Activated CD4-positive, alpha-beta memory T cell treated with anti-CD3 and anti-CD28 coated beads for 36 hours (primary cell): ENCODE measurements at regions of chr4 and their contacts with region 1.

Region 1: DNA sequence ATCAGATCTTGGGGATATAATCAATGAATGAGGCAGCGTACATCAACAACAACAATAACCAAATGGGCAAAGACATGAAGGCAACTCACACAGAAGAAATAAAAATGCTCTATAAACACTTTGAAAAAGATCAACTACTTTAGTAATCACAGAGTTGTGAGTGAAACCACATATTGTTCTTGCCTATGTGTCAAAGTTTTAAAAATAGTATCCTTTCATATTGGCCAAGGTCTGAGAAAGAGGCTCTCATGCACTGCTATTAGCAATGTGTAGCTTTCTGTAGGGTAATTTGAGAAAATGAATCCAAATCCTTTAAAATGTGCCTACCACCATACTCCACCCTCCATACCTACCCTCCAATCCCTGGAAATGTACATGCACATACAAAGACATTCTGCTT is 25.0 kb downstream of the COQ2 start:
- DNase-seq: no peak
- H3K4me3 Mint-ChIP-seq: no peak overlapping the region
- H3K27ac Mint-ChIP-seq: no peak overlapping the region
- H3K4me1 Mint-ChIP-seq: no peaks in the 10 kb centered on the region
- H3K27me3 Mint-ChIP-seq: no peaks in the 10 kb centered on the region

Region 2: DNA sequence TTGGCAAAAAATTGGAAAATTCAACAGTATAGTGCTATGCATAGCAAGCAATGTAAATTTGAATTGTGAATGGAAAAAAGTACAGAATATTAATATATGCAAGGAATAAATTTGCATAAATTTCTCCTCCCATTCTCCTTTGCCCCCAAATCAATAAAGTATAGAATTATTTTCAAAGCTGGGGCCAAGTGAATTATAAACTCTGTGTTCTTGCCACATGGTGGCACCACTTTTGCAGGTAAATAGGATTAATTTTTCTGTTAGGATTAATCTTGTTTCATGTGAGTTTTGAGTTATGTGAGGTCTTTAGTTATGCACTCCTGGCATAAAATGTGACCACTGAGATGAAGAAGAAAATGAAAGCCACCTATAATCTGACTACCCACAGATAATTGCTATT is 204.7 kb before region 1 on chr4:
- CTCF ChIA-PET with region 1: interaction called, 13 read pairs
- POLR2A ChIA-PET with region 1: no interaction called
- intact Hi-C with region 1: no loop called
- DNase-seq: no peak
- H3K4me3 Mint-ChIP-seq: no peak overlapping the region
- H3K27ac Mint-ChIP-seq: no peak overlapping the region
- H3K4me1 Mint-ChIP-seq: no peaks in the 10 kb centered on the region
- H3K27me3 Mint-ChIP-seq: no peaks in the 10 kb centered on the region

Region 3: DNA sequence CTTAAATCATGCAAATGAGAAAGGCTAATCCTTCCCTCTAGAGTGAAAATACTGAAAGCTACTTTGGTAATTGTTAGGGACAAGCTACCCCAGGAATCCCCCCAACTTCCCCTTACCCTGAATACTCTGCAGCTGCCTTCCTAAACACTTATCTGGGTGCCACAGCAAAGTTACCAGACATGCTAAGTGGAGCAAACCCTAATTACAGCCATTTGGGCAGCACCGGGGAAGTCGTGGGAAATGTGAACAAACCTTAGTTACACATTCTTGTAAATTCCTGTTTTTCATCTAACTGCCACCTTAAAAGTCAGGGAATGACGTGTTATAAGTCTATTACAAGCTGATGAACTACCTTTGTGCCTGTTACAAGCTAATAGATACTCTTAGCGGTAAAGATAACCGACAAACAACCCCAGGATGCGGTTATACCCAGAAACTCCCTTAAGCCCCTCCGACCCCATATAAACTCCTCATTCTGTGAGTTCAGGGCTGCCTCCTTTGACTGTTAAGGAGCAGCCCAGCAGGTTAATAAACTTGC is 79.1 kb before region 1 on chr4:
- CTCF ChIA-PET with region 1: no interaction called
- POLR2A ChIA-PET with region 1: no interaction called
- intact Hi-C with region 1: no loop called
- DNase-seq: no peak
- H3K4me3 Mint-ChIP-seq: no peak overlapping the region
- H3K27ac Mint-ChIP-seq: no peak overlapping the region
- H3K4me1 Mint-ChIP-seq: no peaks in the 10 kb centered on the region
- H3K27me3 Mint-ChIP-seq: no peaks in the 10 kb centered on the region

Region 4: DNA sequence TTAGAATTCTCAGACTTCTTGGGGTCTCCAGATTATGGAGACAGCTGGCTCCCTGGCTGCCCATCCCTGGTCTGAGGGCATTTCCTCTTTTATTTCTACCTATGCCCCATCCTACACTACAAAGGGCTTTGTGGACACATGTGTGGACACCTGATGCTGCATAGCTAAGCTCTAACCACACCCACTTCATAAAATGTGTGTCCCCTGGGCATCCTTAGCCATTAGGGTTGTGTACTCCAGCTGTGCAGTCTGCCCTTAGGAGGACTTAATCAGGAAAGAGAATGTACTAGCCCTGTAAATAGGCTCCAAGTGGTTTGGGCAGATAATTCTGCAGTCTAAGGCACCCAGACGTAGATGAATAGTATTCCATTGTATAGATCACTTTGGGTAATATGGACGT is 22.0 kb before region 1 on chr4:
- CTCF ChIA-PET with region 1: interaction called, 11 read pairs
- POLR2A ChIA-PET with region 1: no interaction called
- intact Hi-C with region 1: no loop called
- DNase-seq: no peak
- H3K4me3 Mint-ChIP-seq: no peak overlapping the region
- H3K27ac Mint-ChIP-seq: no peak overlapping the region
- H3K4me1 Mint-ChIP-seq: peaks cover 36% of the 10 kb centered on the region
- H3K27me3 Mint-ChIP-seq: peaks cover 41% of the 10 kb centered on the region

Region 5: DNA sequence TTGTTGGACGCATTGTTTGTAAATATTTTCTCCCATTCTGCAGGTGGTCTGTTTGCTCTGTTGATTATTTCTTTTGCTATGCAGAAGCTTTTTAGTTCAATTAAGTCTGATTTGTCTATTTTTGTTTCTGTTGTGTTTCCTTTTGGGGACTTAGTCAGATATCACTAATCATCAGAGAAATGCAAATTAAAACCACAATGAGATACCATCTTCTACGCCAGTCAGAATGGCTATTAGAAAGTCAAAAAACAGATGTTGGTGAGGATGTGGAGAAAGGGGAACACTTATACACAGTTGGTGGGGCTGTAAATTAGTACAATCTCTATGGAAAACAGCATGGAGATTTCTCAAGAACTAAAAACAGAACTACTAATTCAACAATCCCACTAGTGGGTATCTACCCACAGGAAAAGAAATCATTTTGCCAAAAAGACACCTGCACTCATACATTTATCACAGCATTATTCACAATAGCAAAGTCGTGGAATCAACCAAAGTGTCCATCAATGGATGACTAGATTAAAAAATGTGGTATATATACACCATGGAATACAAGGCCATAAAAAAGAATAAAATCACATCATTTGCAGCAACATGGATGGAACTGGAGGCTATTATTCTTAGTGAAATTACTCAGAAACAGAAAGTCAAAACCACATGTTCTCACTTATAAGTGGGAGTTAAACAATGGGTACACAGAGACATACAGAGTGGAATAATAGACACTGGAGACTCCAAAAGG is 16.9 kb after region 1 on chr4:
- CTCF ChIA-PET with region 1: interaction called, 17 read pairs
- POLR2A ChIA-PET with region 1: no interaction called
- intact Hi-C with region 1: no loop called
- DNase-seq: no peak
- H3K4me3 Mint-ChIP-seq: no peak overlapping the region
- H3K27ac Mint-ChIP-seq: peak overlapping the region; percentile 35
- H3K4me1 Mint-ChIP-seq: peaks cover 33% of the 10 kb centered on the region
- H3K27me3 Mint-ChIP-seq: no peaks in the 10 kb centered on the region

Region 6: GRCh38 chr4:83438719-83439118 is 179.1 kb after region 1 on chr4:
- CTCF ChIA-PET with region 1: no interaction called
- POLR2A ChIA-PET with region 1: no interaction called
- intact Hi-C with region 1: no loop called
- DNase-seq: no peak
- H3K4me3 Mint-ChIP-seq: no peak overlapping the region
- H3K27ac Mint-ChIP-seq: no peak overlapping the region
- H3K4me1 Mint-ChIP-seq: no peaks in the 10 kb centered on the region
- H3K27me3 Mint-ChIP-seq: no peaks in the 10 kb centered on the region